ENCODE measurements at regions of chr11 and their contacts with region 1.

Region 1: GRCh38 chr11:2992234-2992996 is at the start of gene NAP1L4:
- DNase-seq: peak; percentile 98 to 100
- ATAC-seq: peak; percentile 90 to 93
- H3K4me3 ChIP-seq: peak within 1 kb of the TSS; percentile 68
- H3K27ac ChIP-seq: peak within 1 kb of the TSS; percentile 95 to 99
- H3K4me1 ChIP-seq: peaks cover 32% of the 10 kb centered on the region
- CTCF ChIP-seq: no peak
- EP300 ChIP-seq: no peak
- POLR2A ChIP-seq: peak; percentile 70
- RAD21 ChIP-seq: no peak
- polyA plus RNA-seq, gene NAP1L4: 128 and 148 TPM in 2 replicates

Region 2: GRCh38 chr11:1640076-1640946 is 1352.1 kb before region 1 on chr11:
- CTCF ChIA-PET with region 1: no interaction called
- POLR2A ChIA-PET with region 1: interaction called, 13 read pairs
- DNase-seq: peak; percentile 50 to 74
- ATAC-seq: peak; percentile 71 to 95
- H3K4me3 ChIP-seq: no peak overlapping the region
- H3K27ac ChIP-seq: no peak overlapping the region
- H3K4me1 ChIP-seq: no peaks in the 10 kb centered on the region
- CTCF ChIP-seq: peak; percentile 73
- EP300 ChIP-seq: no peak
- POLR2A ChIP-seq: no peak
- RAD21 ChIP-seq: peak; percentile 18; a peak in 1 of 5 replicates

Region 3: DNA sequence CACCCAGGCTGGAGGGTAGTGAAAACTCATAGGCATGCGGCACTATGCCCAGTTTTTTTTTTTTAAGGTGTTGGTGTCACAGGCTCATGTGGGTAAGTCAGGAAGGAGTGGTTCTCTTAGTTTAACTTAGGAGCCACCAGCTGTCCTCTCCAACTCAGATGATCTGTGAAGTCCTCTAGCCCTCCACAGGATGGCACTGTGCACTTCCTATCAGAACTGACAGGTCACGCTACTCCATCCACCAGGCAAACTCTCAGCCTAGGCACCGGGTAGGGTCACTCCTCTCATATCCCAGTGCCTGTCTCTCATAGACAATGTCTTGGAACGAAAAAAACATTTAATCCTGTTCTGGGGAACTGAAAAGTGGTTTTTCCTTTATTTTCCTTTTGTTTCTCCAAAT is 16.8 kb before region 1 on chr11:
- CTCF ChIA-PET with region 1: interaction called, 10 read pairs
- POLR2A ChIA-PET with region 1: interaction called, 4 read pairs
- DNase-seq: peak; percentile 51 to 67
- ATAC-seq: peak; percentile 93 to 97
- H3K4me3 ChIP-seq: no peak overlapping the region
- H3K27ac ChIP-seq: no peak overlapping the region
- H3K4me1 ChIP-seq: no peaks in the 10 kb centered on the region
- CTCF ChIP-seq: peak; percentile 55
- EP300 ChIP-seq: no peak
- POLR2A ChIP-seq: no peak
- RAD21 ChIP-seq: peak; percentile 40 to 44; a peak in 4 of 5 replicates

Region 4: GRCh38 chr11:3177931-3178330 is 185.5 kb after region 1 on chr11:
- CTCF ChIA-PET with region 1: no interaction called
- POLR2A ChIA-PET with region 1: no interaction called
- DNase-seq: no peak
- ATAC-seq: no peak
- H3K4me3 ChIP-seq: no peak overlapping the region
- H3K27ac ChIP-seq: no peak overlapping the region
- H3K4me1 ChIP-seq: no peaks in the 10 kb centered on the region
- CTCF ChIP-seq: no peak
- EP300 ChIP-seq: no peak
- POLR2A ChIP-seq: no peak
- RAD21 ChIP-seq: no peak